ENCODE measurements at regions of chr9 and their contacts with region 1.

Region 1: DNA sequence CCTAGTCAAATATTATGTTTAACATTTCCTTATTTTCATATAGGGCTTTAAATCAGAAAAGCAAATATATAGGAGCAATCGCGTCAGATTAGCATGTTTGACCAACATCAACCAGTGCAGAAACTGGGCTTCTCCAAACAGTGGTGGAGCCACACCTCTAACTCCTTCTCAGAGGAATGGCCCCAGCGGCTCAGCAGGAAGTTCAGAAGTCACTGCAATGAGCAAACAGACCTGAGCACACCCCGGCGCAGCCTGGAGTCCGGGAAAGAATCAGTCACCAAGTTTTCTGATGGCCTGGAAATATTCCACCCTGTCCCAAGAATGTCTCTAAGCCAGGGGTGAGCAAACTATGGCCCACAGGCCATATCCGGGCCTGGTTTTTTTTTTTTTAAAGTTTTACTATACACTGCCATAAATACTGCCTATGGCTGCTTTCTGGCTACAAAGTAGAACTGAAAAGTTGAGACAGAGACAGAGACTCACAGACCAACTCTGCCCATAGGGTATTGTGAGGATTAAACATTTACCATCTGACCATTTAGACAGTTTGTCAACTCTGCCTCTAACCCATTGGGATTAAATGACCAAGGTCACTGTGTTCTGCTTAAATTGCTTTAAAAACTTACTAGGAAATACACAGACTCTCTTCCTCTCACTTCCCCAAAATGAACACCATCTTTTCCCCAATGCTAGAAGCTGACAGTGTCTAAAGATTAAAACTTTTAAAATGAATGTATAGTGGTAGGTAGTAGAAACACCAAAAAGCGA is 5.4 kb downstream of the GOLM1 start:
- DNase-seq: no peak
- H3K4me3 ChIP-seq: no peak overlapping the region
- H3K27me3 ChIP-seq: no peaks in the 10 kb centered on the region
- CTCF ChIP-seq: no peak

Region 2: DNA sequence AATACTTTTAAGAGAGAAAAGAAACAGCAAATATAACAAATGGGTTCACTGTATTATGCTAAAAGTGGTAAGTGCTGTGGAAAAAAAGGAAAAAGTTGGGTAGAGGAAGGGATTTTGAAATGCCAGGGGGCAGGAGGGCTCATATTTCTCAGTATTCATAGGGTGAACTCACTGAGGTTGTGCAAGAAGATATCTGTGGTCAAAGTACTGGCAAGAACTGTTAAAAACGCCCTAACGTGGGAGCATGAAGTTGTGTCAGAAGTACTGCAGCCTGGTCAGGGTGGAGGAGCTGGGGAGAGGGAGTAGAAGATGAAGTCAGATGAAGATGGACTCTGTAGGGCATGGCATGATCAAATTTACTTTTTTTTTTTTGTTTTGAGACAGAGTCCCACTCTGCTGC is 1722.2 kb before region 1 on chr9:
- CTCF ChIA-PET with region 1: no interaction called
- POLR2A ChIA-PET with region 1: no interaction called
- DNase-seq: peak; percentile 66
- H3K4me3 ChIP-seq: no peak overlapping the region
- H3K27me3 ChIP-seq: no peaks in the 10 kb centered on the region
- CTCF ChIP-seq: no peak

Region 3: GRCh38 chr9:86034863-86035734 is 58.9 kb before region 1 on chr9:
- CTCF ChIA-PET with region 1: no interaction called
- POLR2A ChIA-PET with region 1: interaction called, 19 read pairs
- DNase-seq: no peak
- H3K4me3 ChIP-seq: no peak overlapping the region
- H3K27me3 ChIP-seq: no peaks in the 10 kb centered on the region
- CTCF ChIP-seq: peak; percentile 63